ENCODE measurements at regions of chr14 and their contacts with region 1.

Region 1: DNA sequence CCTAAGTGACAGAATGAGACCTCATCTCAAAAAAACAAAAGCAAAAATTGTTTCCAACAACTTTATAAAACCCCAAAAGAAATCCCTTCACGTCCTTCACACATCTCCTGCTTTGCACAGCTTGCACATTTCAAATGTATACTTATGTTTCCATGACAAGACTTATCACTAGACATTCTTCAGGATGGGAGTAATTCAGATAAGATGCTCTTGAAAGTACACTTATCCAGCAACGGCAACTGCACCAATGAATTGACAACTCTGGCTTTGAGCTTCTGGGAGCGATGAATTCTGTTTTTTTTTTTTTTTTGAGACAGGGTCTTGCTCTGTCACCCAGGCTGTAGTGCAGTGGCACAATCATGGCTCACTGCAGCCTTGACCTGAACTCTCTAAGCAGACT is 30.8 kb upstream of the AKAP5 start:
- DNase-seq: no peak
- H3K4me3 Mint-ChIP-seq: no peak overlapping the region
- H3K27ac Mint-ChIP-seq: no peak overlapping the region
- H3K4me1 Mint-ChIP-seq: peaks cover 24% of the 10 kb centered on the region
- H3K27me3 Mint-ChIP-seq: no peaks in the 10 kb centered on the region

Region 2: DNA sequence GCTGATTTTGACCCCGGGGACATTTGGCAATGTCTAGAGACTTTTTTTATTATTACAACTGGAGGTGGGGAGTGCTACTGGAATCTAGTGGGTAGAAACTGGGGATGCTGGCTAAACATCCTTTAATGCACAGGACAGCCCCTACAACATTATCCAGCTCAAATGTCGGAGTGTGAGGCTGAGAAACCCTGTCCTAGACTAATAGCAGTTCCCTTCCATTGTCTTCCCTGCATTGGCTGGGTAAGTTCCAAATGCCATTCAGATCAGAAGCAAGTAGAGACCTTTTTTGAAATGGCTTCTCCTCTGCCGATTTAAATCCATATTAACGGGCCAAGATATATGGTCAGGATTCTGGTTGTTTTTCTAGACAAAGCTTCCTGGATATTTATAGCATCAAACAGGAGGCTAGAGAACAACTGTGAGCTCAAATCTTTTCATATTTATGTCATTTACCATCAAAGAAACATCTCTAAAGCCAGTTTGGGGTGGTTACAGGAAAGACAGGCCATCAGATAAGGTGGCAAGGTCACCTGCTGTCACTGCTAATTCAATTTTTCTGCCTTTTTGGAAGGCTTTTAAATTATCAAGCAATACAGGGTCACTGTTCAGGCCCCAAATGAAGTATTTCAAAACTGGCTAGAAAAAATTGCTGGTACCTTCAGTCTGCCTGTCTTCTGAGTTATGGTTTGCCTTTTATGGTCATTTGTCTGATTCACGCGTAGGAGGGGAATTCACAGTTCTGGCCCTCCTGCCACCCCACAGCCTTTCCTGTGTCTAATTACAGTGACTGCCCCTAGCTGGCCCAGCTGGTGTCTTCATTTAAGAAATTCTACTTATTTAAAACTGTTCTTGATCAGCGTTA is 10.7 kb after region 1 on chr14:
- intact Hi-C with region 1: loop called (anchors 2 kb)
- DNase-seq: peak; percentile 43
- H3K4me3 Mint-ChIP-seq: peak overlapping the region; percentile 68
- H3K27ac Mint-ChIP-seq: peak overlapping the region; percentile 87
- H3K4me1 Mint-ChIP-seq: peaks cover 28% of the 10 kb centered on the region
- H3K27me3 Mint-ChIP-seq: no peaks in the 10 kb centered on the region

Region 3: DNA sequence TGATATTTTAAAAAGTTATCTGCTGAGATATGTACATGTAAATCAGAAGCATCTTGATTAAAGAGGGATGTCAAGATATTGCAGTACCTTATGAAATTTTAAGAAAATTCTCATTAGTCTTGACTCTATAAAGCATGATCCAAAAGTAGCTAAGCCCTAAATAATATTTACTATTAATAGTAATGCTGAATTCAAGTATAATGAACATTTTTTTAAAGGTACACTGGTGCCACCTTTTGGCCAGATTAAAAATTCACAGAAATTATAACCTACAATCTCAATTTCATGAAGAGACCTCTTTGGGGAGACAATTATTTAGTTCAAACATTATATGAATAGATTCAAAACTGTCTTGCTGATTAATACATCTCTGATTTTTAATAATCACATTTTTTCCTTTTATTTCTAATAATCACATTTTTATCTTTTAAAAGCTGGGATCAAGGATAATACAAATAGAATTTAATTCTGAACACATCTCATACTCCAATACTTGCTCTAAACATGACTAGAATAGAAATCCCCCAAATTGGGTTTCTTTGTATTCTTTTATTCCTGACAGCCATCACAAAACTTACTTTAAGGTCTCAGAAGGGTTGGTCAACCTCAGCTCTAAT is 44.2 kb after region 1 on chr14:
- intact Hi-C with region 1: loop called (anchors 1 kb)
- DNase-seq: no peak
- H3K4me3 Mint-ChIP-seq: no peak overlapping the region
- H3K27ac Mint-ChIP-seq: no peak overlapping the region
- H3K4me1 Mint-ChIP-seq: peaks cover 9% of the 10 kb centered on the region
- H3K27me3 Mint-ChIP-seq: no peaks in the 10 kb centered on the region

Region 4: DNA sequence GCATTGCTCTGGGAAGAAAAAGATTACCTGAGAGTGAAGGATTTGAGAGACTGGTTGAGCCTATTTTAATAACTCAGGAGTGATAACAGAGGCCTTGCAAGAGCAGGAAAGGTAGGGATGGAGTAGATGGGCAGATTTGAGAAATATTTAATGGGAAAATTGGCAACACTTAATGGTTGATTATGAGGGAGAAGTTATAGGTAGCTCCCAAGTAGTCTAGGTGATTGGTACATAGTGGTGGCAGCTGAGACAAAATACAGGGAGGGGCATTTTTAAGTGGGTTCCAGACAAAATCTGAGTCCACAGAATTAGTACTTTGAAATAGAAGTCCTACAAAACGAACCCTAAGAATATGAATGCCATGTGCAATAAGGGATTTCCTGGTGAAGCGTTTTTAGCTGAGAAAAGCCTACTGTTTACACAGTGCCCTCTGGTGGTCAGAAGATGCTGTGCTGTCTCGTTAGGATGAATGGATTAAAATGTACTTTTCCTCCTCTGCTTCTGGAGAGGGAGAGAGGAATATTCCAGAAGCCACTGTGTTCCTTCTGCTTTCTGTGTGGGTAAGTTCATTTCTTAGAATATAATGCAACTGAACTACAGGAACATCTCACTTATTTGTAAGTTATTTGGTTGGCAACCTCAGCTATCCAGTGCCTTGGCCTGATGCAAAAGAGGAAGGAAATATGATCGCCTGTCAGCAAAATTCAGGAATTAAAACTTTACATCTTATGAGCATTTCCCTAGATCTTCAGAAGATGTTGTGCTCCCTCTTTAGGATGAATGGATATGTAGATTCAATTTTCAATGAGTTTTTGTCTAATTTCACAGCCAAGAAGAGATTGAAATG is 76.5 kb after region 1 on chr14:
- intact Hi-C with region 1: loop called (anchors 1 kb)
- DNase-seq: peak; percentile 58
- H3K4me3 Mint-ChIP-seq: peak overlapping the region; percentile 63
- H3K27ac Mint-ChIP-seq: peak overlapping the region; percentile 69
- H3K4me1 Mint-ChIP-seq: peaks cover 74% of the 10 kb centered on the region
- H3K27me3 Mint-ChIP-seq: no peaks in the 10 kb centered on the region

Region 5: GRCh38 chr14:64861916-64862315 is 427.4 kb after region 1 on chr14:
- intact Hi-C with region 1: no loop called
- DNase-seq: no peak
- H3K4me3 Mint-ChIP-seq: no peak overlapping the region
- H3K27ac Mint-ChIP-seq: no peak overlapping the region
- H3K4me1 Mint-ChIP-seq: no peaks in the 10 kb centered on the region
- H3K27me3 Mint-ChIP-seq: peaks cover 34% of the 10 kb centered on the region

Measured in activated T-helper 1 cell treated with anti-CD3 and anti-CD28 coated beads, Interleukin-12 subunit alpha, Interleukin-12 subunit beta, Interleukin-2, Interleukin-4 antibody, amounts not matched to agents 30 ng/mL and 10 ng/mL and 1 ng/mL, durations not matched to agents 14 hours and 24 hours and 36 hours (primary cell).